AG04449 (cell line): ENCODE measurements at regions of chr16 and their contacts with region 1.

Region 1: GRCh38 chr16:1929578-1930337 is 11.5 kb upstream of the HS3ST6 start:
- DNase-seq: no peak
- H3K4me3 ChIP-seq: peak overlapping the region; percentile 65
- CTCF ChIP-seq: peak; percentile 85

Region 2: GRCh38 chr16:1782352-1783091 is 147.2 kb before region 1 on chr16 and contains the starts of genes NUBP2 and SPSB3:
- CTCF ChIA-PET with region 1: interaction called, 10 read pairs
- POLR2A ChIA-PET with region 1: no interaction called
- DNase-seq: peak; percentile 100
- H3K4me3 ChIP-seq: peak within 1 kb of the TSS; percentile 81
- CTCF ChIP-seq: no peak

Region 3: GRCh38 chr16:1839554-1839953 is 90.2 kb before region 1 on chr16:
- CTCF ChIA-PET with region 1: interaction called, 14 read pairs
- POLR2A ChIA-PET with region 1: no interaction called
- DNase-seq: peak; percentile 50
- H3K4me3 ChIP-seq: no peak overlapping the region
- CTCF ChIP-seq: no peak

Region 4: DNA sequence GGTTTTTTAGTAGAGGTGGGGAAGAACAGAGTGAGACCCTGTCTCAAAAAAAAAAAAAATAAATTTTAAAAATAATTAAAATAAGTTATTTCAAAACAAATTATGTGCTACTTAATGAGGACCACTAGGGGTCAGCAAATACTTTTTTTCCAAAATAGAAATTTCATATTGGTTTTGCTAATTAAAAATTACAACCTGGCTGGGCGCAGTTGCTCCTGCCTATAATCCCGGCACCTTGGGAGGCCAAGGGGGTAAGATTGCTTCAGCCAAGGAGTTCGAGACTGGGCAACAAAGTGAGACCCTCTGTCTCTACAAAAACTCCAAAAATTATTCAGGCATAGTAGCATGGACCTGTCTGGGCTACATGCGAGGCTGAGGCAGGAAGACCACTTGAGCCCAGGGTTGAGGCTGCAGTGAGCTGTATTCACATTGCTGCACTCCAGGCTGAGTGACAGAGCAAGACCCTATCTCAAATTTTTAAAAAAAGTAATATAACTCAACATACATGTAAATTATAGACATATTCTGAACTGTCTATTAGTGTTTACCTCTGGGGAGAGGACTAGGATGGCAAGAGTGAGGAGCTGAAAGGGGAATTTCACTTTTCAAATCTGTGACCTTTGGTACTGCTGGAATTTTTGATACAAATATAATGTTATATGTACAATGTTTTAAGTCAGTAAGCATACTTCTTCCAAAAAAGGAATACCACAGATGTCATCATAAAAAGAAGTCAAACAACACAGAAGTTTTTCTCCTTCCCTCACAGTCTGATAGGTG is 65.9 kb before region 1 on chr16:
- CTCF ChIA-PET with region 1: interaction called, 345 read pairs
- POLR2A ChIA-PET with region 1: interaction called, 3 read pairs
- DNase-seq: peak; percentile 4
- H3K4me3 ChIP-seq: no peak overlapping the region
- CTCF ChIP-seq: peak; percentile 24

Region 5: DNA sequence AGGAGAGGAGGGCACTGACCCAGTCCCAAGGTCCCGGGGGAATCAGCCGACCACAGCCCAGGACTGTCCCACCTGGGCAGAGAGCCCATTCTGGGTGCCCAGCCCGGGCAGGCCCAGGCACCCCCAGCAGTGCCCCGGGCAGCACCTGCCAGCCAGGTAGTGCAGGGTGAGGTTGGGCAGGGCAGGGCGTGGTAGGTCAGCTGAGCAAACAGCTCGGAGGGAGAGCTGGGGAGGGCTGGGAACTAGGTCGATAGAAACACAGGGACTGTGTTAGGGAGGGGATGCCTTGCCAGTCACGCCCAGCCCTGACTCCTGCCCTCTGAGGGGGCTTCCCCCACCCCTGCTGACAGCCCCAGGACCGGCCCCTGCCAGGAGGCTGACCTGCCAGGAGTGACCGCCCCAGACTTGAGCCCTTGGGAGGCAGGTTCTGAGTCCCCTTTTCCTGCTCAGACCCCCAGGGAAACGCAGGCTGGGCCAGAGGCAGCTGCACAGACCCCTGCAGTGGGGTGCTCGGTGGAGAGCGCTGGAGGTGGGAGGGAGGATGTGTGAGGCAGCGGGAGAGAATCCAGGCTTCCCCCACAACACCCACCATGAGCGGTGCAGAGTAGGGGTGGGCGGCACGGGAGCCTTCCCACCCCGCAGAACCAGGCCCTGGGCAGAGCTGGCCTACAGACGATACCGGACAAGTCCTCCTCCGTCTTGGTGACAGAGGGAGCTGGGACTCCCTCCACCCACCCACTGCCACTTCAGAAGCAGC is 16.3 kb before region 1 on chr16:
- CTCF ChIA-PET with region 1: interaction called, 18 read pairs
- POLR2A ChIA-PET with region 1: no interaction called
- DNase-seq: no peak
- H3K4me3 ChIP-seq: no peak overlapping the region
- CTCF ChIP-seq: no peak